ENCODE measurements at regions of chr10 and their contacts with region 1.

Region 1: DNA sequence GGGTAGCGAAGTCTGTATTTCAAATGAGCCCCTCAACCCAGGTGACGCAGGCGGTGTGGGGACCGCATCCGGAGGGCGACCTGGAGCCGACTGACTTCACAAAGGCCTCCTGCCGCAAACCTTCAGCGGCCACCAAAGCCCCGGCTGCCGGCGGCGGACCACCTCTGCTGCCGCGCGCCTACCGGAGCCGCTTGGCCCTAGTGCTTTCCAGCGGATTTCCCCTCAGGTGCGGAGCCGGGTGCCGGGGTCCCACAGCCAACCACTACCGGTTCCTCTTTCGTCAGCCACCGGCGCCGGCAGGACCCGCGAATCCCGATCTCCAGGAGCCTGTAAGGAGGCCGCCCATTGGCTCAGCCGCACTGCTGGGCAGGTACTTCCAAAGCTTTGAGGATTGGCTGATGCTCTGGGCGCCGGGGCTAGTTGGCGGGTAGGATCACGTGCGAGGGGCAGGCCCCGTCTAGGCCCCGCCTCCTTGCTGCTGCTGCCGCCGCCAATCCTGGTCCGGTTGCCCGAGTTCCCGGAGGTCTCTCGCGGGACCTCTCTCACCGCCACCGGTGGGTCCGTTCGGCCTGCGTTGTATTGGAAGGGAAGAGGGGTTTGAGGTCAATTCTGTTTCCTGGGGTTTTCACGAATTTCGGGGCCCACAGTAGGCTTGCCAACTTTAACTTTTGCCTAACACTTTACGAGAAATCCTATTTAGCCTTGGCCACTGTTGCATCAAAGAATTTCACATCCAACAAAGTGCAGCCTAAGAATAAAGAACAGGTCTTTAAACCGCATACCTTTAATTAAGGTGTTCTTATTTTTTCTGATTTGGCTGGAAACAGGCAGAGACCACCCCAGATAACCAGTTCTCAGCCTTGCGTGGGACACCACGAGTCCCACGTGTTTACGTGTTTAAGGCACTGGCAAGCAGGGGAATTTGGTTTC is at the start of gene GSTO2:
- DNase-seq: peak; percentile 94 to 100 (median 96)
- ATAC-seq: peak; percentile 89
- H3K4me3 ChIP-seq: peak within 1 kb of the TSS; percentile 84
- H3K4me3 Mint-ChIP-seq: peak within 1 kb of the TSS; percentile 94
- H3K27ac ChIP-seq: peak within 1 kb of the TSS; percentile 92
- H3K27ac Mint-ChIP-seq: peak within 1 kb of the TSS; percentile 93
- H3K4me1 ChIP-seq: peaks cover 24% of the 10 kb centered on the region
- H3K4me1 Mint-ChIP-seq: peaks cover 48% of the 10 kb centered on the region
- H3K27me3 ChIP-seq: no peaks in the 10 kb centered on the region
- H3K27me3 Mint-ChIP-seq: no peaks in the 10 kb centered on the region
- CTCF ChIP-seq: no peak
- total RNA-seq, gene GSTO2: 0.77 to 1.2 TPM

Region 2: DNA sequence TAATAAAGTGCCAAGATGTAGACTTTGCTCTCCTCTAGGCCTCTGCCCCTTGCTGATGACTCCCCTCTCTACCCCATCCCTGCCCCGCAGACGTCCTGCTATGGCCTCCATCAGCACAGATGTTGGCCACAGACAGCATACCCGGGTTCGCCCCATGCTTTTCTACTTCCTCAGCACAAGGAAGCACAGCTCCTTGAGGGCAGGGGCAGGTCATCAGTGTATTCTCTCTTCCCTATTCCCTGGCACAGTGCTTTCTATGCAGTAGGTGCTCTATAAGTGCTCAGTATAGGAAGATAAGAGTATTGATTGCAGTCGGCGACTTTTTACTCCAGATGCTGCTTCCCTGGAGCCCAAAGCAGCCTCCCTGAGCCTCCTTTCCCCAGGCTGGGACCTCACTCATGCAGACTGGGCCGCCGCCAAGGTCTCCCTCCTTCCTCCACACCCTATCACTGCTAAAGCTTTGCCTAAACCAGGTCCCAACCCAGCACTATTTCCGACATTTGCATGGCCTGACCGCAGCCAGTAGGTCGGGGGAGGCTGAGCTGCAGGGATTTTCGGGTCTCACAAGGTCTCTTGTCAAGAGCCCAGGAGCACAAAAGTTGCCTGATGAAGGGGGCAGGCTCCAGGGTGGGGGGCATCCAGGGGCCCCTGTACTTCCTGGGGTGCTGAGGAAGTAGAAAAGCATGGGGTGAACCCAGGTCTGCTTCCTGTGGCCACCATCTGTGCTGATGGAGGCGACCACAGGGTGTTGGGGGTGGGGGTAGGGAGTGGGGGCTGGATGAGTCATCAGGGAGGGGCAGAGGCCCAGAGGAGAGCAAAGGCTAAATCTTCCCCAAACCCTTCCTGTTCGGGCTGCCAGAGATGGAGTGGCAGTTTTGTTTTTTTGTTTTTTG is 798.0 kb before region 1 on chr10:
- CTCF ChIA-PET with region 1: no interaction called
- POLR2A ChIA-PET with region 1: no interaction called
- intact Hi-C with region 1: no loop called
- DNase-seq: peak; percentile 36 to 92 (median 68)
- ATAC-seq: peak; percentile 89
- H3K4me3 ChIP-seq: peak overlapping the region; percentile 25
- H3K4me3 Mint-ChIP-seq: peak overlapping the region; percentile 46
- H3K27ac ChIP-seq: peak overlapping the region; percentile 37 to 76
- H3K27ac Mint-ChIP-seq: peak overlapping the region; percentile 80
- H3K4me1 ChIP-seq: peaks cover 54% of the 10 kb centered on the region
- H3K4me1 Mint-ChIP-seq: peaks cover 34% of the 10 kb centered on the region
- H3K27me3 ChIP-seq: no peaks in the 10 kb centered on the region
- H3K27me3 Mint-ChIP-seq: no peaks in the 10 kb centered on the region
- CTCF ChIP-seq: no peak

Region 3: GRCh38 chr10:103918053-103918846 is 350.7 kb before region 1 on chr10 and contains the start of gene STN1:
- CTCF ChIA-PET with region 1: no interaction called
- POLR2A ChIA-PET with region 1: no interaction called
- intact Hi-C with region 1: loop called (anchors 2 to 5 kb)
- DNase-seq: peak; percentile 88 to 97 (median 95)
- ATAC-seq: peak; percentile 93
- H3K4me3 ChIP-seq: peak within 1 kb of the TSS; percentile 83
- H3K4me3 Mint-ChIP-seq: peak within 1 kb of the TSS; percentile 94
- H3K27ac ChIP-seq: peak within 1 kb of the TSS; percentile 79 to 81
- H3K27ac Mint-ChIP-seq: peak within 1 kb of the TSS; percentile 93
- H3K4me1 ChIP-seq: peaks cover 56% of the 10 kb centered on the region
- H3K4me1 Mint-ChIP-seq: peaks cover 47% of the 10 kb centered on the region
- H3K27me3 ChIP-seq: no peaks in the 10 kb centered on the region
- H3K27me3 Mint-ChIP-seq: no peaks in the 10 kb centered on the region
- CTCF ChIP-seq: peak; percentile 20
- total RNA-seq, gene STN1: 13.0 to 13.4 TPM

Region 4: DNA sequence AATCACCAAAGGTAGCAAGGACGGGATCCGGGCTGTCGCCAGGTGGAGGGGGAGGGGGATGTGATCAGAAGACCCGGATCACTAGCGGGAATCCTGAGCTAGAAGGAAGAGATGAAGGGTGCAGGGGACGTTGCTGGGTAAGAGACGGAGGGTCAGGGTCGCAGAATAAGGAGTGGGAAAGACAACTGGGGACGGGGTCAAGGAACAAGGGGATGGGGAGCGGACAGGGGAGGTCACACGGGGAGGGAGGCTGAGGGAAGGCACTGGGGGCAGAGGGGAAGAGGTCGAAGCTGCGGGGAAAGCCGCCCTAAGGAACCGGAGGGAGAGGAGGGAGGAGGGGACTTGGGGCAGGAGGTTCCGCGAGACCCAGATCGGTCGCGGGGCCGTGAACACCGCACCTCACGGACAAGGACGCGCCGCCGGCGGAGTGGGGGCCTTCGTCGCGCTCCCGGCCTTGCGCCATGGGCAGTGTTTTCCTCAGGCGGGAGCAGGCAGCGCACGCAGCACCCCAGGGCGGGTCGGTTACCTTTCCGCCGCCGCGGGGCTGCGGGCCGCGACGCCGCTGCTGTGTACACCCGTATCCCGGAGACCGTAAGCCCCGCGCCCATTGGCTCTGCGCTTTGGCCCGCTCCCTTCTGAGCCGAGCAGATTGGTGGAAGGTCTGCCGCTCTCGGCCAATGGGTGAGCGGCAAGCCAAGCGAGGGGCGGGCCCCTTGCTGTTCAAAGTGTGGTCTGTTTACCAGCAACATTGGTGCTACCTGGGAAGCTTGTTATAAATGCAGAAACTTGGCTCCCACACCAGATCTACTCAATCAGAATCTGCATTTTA is 37.0 kb before region 1 on chr10 and contains the start of gene CFAP43:
- CTCF ChIA-PET with region 1: no interaction called
- POLR2A ChIA-PET with region 1: interaction called, 7 read pairs
- intact Hi-C with region 1: loop called (anchors 1 to 2 kb)
- DNase-seq: peak; percentile 99 to 100 (median 99)
- ATAC-seq: peak; percentile 99
- H3K4me3 ChIP-seq: peak within 1 kb of the TSS; percentile 74
- H3K4me3 Mint-ChIP-seq: peak within 1 kb of the TSS; percentile 96
- H3K27ac ChIP-seq: no peak within 1 kb of the TSS
- H3K27ac Mint-ChIP-seq: peak within 1 kb of the TSS; percentile 83
- H3K4me1 ChIP-seq: peaks cover 13% of the 10 kb centered on the region
- H3K4me1 Mint-ChIP-seq: peaks cover 14% of the 10 kb centered on the region
- H3K27me3 ChIP-seq: peaks cover 6 to 9% of the 10 kb centered on the region in 2 experiments
- H3K27me3 Mint-ChIP-seq: peaks cover 33% of the 10 kb centered on the region
- CTCF ChIP-seq: no peak
- total RNA-seq, gene CFAP43: not detected

Region 5: DNA sequence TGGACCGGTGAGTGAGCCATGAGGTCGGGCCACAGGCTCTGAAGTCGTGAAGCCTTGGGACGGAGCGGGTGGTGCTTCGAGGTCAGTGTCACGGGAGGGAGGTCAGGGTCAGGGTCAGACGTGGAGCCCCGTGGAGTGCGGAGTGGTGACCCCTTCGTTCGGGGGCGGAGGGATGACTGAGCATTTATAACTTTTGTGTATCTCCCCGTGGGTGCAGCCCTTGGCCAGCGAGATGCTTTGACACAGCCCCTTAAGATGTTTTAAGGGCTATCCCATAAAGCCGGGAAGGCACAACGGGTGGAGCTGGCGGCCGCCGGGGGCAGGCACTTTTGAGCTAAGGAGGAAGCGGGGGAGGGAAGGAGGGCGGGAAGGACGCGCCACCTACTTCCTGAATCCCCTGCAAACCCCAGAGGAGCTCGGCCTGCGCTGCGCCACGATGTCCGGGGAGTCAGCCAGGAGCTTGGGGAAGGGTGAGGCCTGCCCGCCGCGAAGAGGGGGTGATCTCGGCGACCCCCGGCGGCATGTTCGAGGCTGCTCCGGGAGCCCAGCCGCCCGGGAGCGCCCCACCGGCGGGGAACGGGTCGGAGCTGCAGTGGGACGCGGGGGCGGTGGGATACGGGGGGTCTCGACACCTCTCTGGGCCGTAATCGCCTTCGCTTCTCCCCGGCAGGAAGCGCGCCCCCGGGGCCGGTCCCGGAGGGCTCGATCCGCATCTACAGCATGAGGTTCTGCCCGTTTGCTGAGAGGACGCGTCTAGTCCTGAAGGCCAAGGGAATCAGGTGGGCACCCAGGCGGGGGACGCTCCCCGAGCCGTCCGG is 14.3 kb before region 1 on chr10 and contains the start of gene GSTO1:
- CTCF ChIA-PET with region 1: interaction called, 17 read pairs
- POLR2A ChIA-PET with region 1: interaction called, 102 read pairs
- intact Hi-C with region 1: loop called in 1 of 2 experiments (anchors 1 kb)
- DNase-seq: peak in 13 of 14 experiments; percentile 13 to 77 (median 46)
- ATAC-seq: peak; percentile 50
- H3K4me3 ChIP-seq: peak within 1 kb of the TSS; percentile 98
- H3K4me3 Mint-ChIP-seq: peak within 1 kb of the TSS; percentile 99
- H3K27ac ChIP-seq: peak within 1 kb of the TSS; percentile 73 to 83
- H3K27ac Mint-ChIP-seq: peak within 1 kb of the TSS; percentile 87
- H3K4me1 ChIP-seq: peaks cover 27% of the 10 kb centered on the region
- H3K4me1 Mint-ChIP-seq: peaks cover 51% of the 10 kb centered on the region
- H3K27me3 ChIP-seq: no peaks in the 10 kb centered on the region
- H3K27me3 Mint-ChIP-seq: no peaks in the 10 kb centered on the region
- CTCF ChIP-seq: no peak
- total RNA-seq, gene GSTO1: 23.9 to 26.1 TPM

Region 6: DNA sequence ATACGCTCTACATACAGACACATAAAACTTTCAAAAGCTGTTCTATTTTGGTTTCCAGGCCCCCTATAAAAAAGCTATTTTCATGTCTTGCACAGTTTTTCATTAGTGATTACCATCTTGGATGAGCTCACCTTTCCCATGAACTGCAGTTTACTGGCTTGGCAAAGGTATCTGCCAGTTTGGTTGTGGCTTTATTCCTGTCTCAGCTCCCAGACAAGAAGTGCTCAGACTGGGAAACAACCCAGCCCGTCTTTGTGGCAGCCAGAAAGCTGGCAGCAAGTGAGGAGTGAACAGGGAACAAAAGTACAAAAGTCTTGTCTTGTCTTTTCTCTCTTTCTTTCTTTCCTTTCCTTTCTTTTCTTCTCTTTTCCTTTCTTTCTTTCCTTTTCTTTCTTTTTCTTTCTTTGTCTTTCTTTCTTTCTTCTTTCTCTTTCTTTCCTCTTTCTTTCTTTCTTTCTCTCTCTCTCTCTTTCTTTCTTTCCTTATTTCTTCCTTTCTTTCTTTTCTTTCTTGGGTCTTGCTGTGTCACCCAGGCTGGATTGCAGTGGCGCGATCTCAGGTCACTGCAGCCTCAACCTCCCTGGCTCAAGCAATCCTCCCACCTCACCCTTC is 223.5 kb after region 1 on chr10:
- CTCF ChIA-PET with region 1: no interaction called
- POLR2A ChIA-PET with region 1: no interaction called
- intact Hi-C with region 1: no loop called
- DNase-seq: no peak
- ATAC-seq: no peak
- H3K4me3 ChIP-seq: no peak overlapping the region
- H3K4me3 Mint-ChIP-seq: no peak overlapping the region
- H3K27ac ChIP-seq: no peak overlapping the region
- H3K27ac Mint-ChIP-seq: no peak overlapping the region
- H3K4me1 ChIP-seq: no peaks in the 10 kb centered on the region
- H3K4me1 Mint-ChIP-seq: no peaks in the 10 kb centered on the region
- H3K27me3 ChIP-seq: peaks cover 0 to 4% of the 10 kb centered on the region in 2 experiments
- H3K27me3 Mint-ChIP-seq: peaks cover 26% of the 10 kb centered on the region
- CTCF ChIP-seq: no peak

Measured in CD4-positive, alpha-beta T cell (primary cell).